Heart left ventricle (tissue), 16 donors: ENCODE measurements at regions of chr1 and their contacts with region 1.

Region 1: GRCh38 chr1:208159555-208160258 is 84.5 kb downstream of the PLXNA2 start:
- DNase-seq: peak in 1 of 5 donors; percentile 58
- ATAC-seq: peak; percentile 8 to 60 (median 48)
- H3K4me3 ChIP-seq: no peak overlapping the region
- H3K27ac ChIP-seq: peak overlapping the region in 10 of 12 donors; percentile 9 to 73 (median 53)
- H3K4me1 ChIP-seq: peaks cover 19 to 91% (median 71%) of the 10 kb centered on the region in 12 donors
- H3K27me3 ChIP-seq: no peaks in the 10 kb centered on the region
- CTCF ChIP-seq: no peak
- POLR2A ChIP-seq: no peak

Region 2: GRCh38 chr1:208115924-208116640 is 43.6 kb before region 1 on chr1:
- intact Hi-C with region 1: loop called in 1 of 10 experiments (anchors 5 kb)
- DNase-seq: no peak
- ATAC-seq: peak; percentile 37 to 72 (median 38)
- H3K4me3 ChIP-seq: no peak overlapping the region
- H3K27ac ChIP-seq: peak overlapping the region in 2 of 12 donors; percentile 39 to 49
- H3K4me1 ChIP-seq: peaks cover 0 to 47% (median 12%) of the 10 kb centered on the region in 12 donors
- H3K27me3 ChIP-seq: no peaks in the 10 kb centered on the region
- CTCF ChIP-seq: no peak
- POLR2A ChIP-seq: no peak

Region 3: GRCh38 chr1:208177656-208178055 is 17.9 kb after region 1 on chr1:
- intact Hi-C with region 1: loop called in 1 of 10 experiments (anchors 2 kb)
- DNase-seq: no peak
- ATAC-seq: no peak
- H3K4me3 ChIP-seq: no peak overlapping the region
- H3K27ac ChIP-seq: no peak overlapping the region
- H3K4me1 ChIP-seq: peaks cover 0 to 85% (median 60%) of the 10 kb centered on the region in 12 donors
- H3K27me3 ChIP-seq: no peaks in the 10 kb centered on the region
- CTCF ChIP-seq: no peak
- POLR2A ChIP-seq: no peak

Region 4: GRCh38 chr1:208203127-208203847 is 43.6 kb after region 1 on chr1:
- intact Hi-C with region 1: loop called in 1 of 10 experiments (anchors 5 kb)
- DNase-seq: peak; percentile 61 to 73 (median 64)
- ATAC-seq: peak in 3 of 4 donors; percentile 21 to 48 (median 39)
- H3K4me3 ChIP-seq: peak overlapping the region in 1 of 12 donors; percentile 11
- H3K27ac ChIP-seq: peak overlapping the region; percentile 64 to 86 (median 76)
- H3K4me1 ChIP-seq: peaks cover 17 to 86% (median 71%) of the 10 kb centered on the region in 12 donors
- H3K27me3 ChIP-seq: no peaks in the 10 kb centered on the region
- CTCF ChIP-seq: no peak
- POLR2A ChIP-seq: no peak

Region 5: DNA sequence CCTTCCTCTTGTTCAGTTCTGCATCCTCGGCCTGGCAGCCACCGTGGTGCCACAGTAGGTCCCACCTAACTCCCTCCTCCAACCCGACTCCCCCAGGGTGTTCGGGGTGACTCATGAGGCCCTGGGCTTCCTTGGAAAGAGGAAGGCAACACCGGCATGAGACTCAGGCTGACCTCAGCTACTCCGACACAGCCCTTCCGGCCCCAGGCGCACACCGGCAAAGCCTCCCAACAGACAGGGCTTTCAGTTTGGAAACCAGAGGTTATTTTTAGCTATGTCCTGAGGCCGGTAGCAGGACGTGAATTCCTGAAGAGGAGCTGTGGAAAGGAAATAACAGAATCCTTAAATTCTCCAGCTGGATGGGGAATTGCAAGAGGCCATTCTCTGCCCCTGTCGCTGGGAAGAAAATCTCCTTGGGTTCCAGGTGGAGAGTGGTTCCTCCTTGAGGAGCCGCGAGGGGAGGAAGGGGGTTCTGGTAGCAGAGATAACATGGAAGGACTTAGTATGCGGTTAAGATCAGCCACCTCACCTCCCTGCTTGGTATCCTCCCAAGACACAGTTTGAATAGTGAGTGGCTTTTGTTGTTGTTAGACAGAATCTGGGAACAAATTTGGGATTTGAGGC is 60.1 kb after region 1 on chr1:
- intact Hi-C with region 1: loop called in 1 of 10 experiments (anchors 5 kb)
- DNase-seq: peak; percentile 79 to 90 (median 84)
- ATAC-seq: peak; percentile 79 to 91 (median 84)
- H3K4me3 ChIP-seq: peak overlapping the region in 4 of 12 donors; percentile 2 to 19 (median 6)
- H3K27ac ChIP-seq: peak overlapping the region; percentile 35 to 94 (median 84)
- H3K4me1 ChIP-seq: peaks cover 15 to 93% (median 75%) of the 10 kb centered on the region in 12 donors
- H3K27me3 ChIP-seq: no peaks in the 10 kb centered on the region
- CTCF ChIP-seq: no peak
- POLR2A ChIP-seq: no peak